T-cell (primary cell): ENCODE measurements at regions of chr3 and their contacts with region 1.

Region 1: GRCh38 chr3:171480526-171480925 is 20.3 kb upstream of the TNIK start:
- DNase-seq: peak in 2 of 35 experiments; percentile 5 to 47
- ATAC-seq: peak; percentile 74 to 90 (median 80)
- H3K4me3 ChIP-seq: no peak overlapping the region
- H3K4me3 Mint-ChIP-seq: peak overlapping the region; percentile 19 to 45 (median 22)
- H3K27ac ChIP-seq: peak overlapping the region; percentile 52
- H3K27ac Mint-ChIP-seq: peak overlapping the region; percentile 89 to 90
- H3K4me1 ChIP-seq: peaks cover 0 to 13% of the 10 kb centered on the region in 2 experiments
- H3K4me1 Mint-ChIP-seq: peaks cover 10 to 16% (median 15%) of the 10 kb centered on the region in 3 donors
- H3K27me3 ChIP-seq: no peaks in the 10 kb centered on the region
- H3K27me3 Mint-ChIP-seq: no peaks in the 10 kb centered on the region

Region 2: DNA sequence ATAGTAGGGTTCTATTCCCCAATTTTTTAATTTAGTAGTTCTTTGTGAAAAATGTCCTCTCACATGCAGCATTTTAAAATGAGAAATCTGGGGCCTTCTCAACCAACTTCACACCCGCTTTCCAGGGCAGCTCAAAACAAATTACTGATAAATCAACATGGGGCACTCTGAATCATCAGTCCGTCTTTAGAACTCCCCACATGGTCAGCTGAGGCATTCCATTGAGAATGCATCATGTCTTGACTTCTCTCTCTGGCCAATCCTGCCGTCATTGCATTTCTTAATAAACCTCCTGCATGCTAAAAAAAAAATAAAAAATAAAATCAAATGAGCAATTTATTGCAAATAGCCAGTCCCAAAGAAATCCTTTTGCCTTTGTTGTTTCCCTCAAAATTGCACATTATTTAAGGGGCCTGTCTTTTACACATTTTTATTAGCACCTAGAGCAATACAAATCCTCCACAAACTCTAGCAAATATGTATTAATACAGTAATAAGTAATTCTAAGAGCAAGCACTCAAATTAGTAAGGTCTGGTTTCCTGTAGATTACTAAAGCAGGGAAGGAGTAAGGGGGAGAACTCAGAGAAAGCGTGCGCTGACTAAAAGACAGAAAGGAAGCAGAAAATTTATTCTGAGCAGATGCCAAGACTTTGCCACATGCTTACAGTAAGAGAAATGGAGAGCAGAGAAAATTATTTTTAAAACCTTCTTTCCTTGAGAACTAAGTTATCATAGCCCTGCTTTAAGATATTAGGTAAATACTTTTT is 196.0 kb before region 1 on chr3:
- CTCF ChIA-PET with region 1: no interaction called
- POLR2A ChIA-PET with region 1: interaction called in 1 of 2 experiments, 11 read pairs
- DNase-seq: no peak
- ATAC-seq: peak; percentile 42 to 72 (median 61)
- H3K4me3 ChIP-seq: no peak overlapping the region
- H3K4me3 Mint-ChIP-seq: peak overlapping the region in 1 of 3 donors; percentile 8
- H3K27ac ChIP-seq: no peak overlapping the region
- H3K27ac Mint-ChIP-seq: peak overlapping the region in 1 of 2 donors; percentile 20
- H3K4me1 ChIP-seq: peaks cover 2 to 9% of the 10 kb centered on the region in 2 experiments
- H3K4me1 Mint-ChIP-seq: peaks cover 72 to 75% (median 74%) of the 10 kb centered on the region in 3 donors
- H3K27me3 ChIP-seq: no peaks in the 10 kb centered on the region
- H3K27me3 Mint-ChIP-seq: no peaks in the 10 kb centered on the region

Region 3: GRCh38 chr3:171468296-171468906 is 12.1 kb before region 1 on chr3:
- CTCF ChIA-PET with region 1: no interaction called
- POLR2A ChIA-PET with region 1: interaction called in 1 of 2 experiments, 11 read pairs
- DNase-seq: no peak
- ATAC-seq: no peak
- H3K4me3 ChIP-seq: no peak overlapping the region
- H3K4me3 Mint-ChIP-seq: no peak overlapping the region
- H3K27ac ChIP-seq: no peak overlapping the region
- H3K27ac Mint-ChIP-seq: no peak overlapping the region
- H3K4me1 ChIP-seq: no peaks in the 10 kb centered on the region
- H3K4me1 Mint-ChIP-seq: no peaks in the 10 kb centered on the region
- H3K27me3 ChIP-seq: no peaks in the 10 kb centered on the region
- H3K27me3 Mint-ChIP-seq: no peaks in the 10 kb centered on the region

Region 4: DNA sequence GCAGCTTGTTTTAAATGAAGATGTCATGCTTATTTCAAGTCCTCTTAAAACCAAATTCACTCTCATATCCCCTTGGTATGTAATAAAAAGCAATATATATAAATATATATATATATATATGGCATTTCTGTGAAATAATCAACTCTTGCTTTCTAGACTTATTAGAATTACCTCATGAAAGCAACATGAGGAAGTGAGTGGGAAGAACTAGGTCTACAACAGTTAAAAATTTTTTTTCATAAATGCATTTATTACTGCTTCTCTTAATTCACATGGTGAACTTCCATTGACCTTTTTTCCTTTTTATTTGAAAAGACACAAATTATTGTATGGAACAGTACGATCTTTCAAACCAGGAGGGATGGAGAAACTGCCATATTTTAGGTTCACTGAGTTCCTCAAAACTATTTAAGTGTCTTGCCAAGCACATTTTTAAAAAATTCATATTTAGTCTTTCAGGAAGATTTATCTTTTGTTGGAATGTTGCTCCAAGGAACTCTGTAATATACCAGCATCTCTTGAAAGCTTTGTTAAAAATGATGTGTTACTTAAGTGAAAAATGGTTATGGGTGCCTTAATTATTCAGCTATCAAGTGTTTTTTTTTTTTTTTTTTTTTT is 782.6 kb after region 1 on chr3:
- CTCF ChIA-PET with region 1: no interaction called
- POLR2A ChIA-PET with region 1: interaction called in 1 of 2 experiments, 16 read pairs
- DNase-seq: no peak
- ATAC-seq: no peak
- H3K4me3 ChIP-seq: no peak overlapping the region
- H3K4me3 Mint-ChIP-seq: no peak overlapping the region
- H3K27ac ChIP-seq: no peak overlapping the region
- H3K27ac Mint-ChIP-seq: no peak overlapping the region
- H3K4me1 ChIP-seq: no peaks in the 10 kb centered on the region
- H3K4me1 Mint-ChIP-seq: peaks cover 0 to 3% (median 2%) of the 10 kb centered on the region in 3 donors
- H3K27me3 ChIP-seq: no peaks in the 10 kb centered on the region
- H3K27me3 Mint-ChIP-seq: no peaks in the 10 kb centered on the region